ENCODE measurements at regions of chr3 and their contacts with region 1.

Region 1: DNA sequence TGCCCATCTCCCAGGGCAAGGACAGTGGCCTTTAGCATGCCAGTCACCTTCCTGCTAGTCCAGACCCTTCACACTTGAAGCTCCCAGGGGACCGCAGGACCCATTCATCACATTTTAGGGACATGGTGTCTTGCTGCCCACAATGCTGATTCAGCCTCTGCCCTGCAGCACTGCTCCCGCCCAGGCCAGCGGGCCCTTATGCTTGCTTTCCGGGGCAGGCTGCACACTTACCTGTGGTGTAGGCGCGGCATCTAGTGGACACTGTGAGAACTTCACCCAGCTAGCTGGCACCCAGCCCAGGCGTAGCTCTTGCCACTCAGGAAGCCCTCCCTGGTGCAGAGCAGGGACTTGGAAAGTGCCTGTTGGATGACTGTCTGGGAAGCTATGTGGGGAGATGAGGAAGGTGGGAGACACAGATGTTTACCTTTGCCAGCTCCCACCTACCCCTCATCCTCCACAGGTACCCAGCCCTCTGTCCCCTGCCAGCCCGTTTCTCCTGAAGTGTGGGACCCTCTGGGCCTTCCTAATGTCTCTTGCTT is 26.2 kb upstream of the NR2C2 start:
- DNase-seq: peak; percentile 83
- CTCF ChIP-seq: peak; percentile 88

Region 2: DNA sequence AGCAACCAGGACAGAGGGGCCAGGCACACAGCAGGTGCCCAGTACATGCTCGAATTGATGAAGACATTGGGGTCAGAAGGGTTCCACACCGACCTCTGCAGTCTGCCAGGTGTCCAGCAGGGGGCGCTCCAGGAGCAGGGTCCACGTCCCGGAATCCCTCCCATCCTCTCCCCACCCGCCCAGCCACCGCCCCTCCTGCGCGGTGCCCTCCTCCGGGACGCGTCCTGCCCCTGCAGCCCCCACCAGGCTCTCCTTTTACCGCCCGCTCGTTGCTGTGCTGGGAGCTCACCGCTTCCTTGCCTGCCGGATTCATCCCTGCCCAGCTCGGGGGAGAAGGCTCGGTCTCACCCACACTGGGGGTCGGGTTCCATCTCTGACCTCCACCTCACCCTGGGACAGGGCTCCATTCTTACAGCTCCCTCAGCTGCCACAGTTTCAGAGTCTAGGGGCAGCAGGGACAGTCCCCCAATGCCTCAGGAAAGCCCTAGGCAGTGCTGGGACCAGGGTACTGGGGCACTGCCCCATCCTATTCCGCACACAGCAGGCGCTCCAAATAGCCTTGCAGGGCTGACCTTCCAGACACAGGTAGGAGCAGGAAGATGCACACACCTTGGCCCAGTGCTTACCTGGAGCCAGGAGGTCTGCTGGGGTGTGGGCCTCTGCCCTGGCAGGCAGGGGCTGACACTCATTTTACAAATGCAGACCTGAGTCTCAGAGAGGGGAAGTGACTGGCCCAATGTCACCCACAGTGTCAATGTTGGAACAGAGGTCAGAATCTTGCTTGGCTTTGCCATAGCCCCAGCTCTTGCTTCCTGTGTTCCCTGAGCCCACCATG is 412.0 kb before region 1 on chr3:
- CTCF ChIA-PET with region 1: interaction called, 59 read pairs
- POLR2A ChIA-PET with region 1: no interaction called
- DNase-seq: peak; percentile 87
- CTCF ChIP-seq: peak; percentile 93

Region 3: GRCh38 chr3:14672588-14672987 is 248.6 kb before region 1 on chr3:
- CTCF ChIA-PET with region 1: interaction called, 23 read pairs
- POLR2A ChIA-PET with region 1: interaction called, 3 read pairs
- DNase-seq: no peak
- CTCF ChIP-seq: no peak

Region 4: GRCh38 chr3:14861446-14862302 is 59.5 kb before region 1 on chr3:
- CTCF ChIA-PET with region 1: interaction called, 10 read pairs
- POLR2A ChIA-PET with region 1: no interaction called
- DNase-seq: no peak
- CTCF ChIP-seq: no peak

Region 5: GRCh38 chr3:14933820-14934425 is 12.8 kb after region 1 on chr3:
- CTCF ChIA-PET with region 1: interaction called, 11 read pairs
- POLR2A ChIA-PET with region 1: no interaction called
- DNase-seq: no peak
- CTCF ChIP-seq: no peak

Region 6: GRCh38 chr3:14969671-14970070 is 48.5 kb after region 1 on chr3:
- CTCF ChIA-PET with region 1: no interaction called
- POLR2A ChIA-PET with region 1: no interaction called
- DNase-seq: no peak
- CTCF ChIP-seq: no peak

Region 7: DNA sequence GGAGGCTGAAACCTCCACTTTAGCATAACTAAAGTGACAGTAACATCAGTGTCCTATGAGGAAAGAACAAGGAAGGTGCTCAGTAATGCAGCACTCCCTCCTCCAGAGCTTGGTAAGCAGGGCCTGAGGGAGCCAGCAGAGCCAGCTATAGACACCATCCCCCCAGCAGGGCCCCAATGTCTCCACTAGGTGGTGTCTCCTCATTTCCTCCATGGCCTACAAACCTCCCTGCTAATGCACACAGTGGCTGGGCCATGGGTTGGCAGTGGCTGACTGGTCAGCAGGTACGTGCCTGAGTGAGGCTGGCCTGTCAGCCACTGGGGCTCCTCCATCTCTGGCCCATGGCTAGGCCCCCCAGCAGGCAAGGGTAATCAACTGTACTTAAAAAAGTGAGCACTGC is 130.4 kb after region 1 on chr3:
- CTCF ChIA-PET with region 1: interaction called, 10 read pairs
- POLR2A ChIA-PET with region 1: no interaction called
- DNase-seq: peak; percentile 72
- CTCF ChIP-seq: peak; percentile 65

Measured in GM10248 (cell line).